Activated CD8-positive, alpha-beta T cell treated with anti-CD3 and anti-CD28 coated beads, Interleukin-2, amount 10 ng/mL, durations not matched to agents 7 days and 5 days (primary cell): ENCODE measurements at regions of chr17 and their contacts with region 1.

Region 1: GRCh38 chr17:7478276-7479153 is 916 bp downstream of the ZBTB4 start:
- DNase-seq: peak; percentile 74
- ATAC-seq: peak; percentile 37
- H3K4me3 Mint-ChIP-seq: peak overlapping the region; percentile 94
- H3K27ac Mint-ChIP-seq: peak overlapping the region; percentile 90
- H3K4me1 Mint-ChIP-seq: peaks cover 71% of the 10 kb centered on the region
- H3K27me3 Mint-ChIP-seq: no peaks in the 10 kb centered on the region

Region 2: DNA sequence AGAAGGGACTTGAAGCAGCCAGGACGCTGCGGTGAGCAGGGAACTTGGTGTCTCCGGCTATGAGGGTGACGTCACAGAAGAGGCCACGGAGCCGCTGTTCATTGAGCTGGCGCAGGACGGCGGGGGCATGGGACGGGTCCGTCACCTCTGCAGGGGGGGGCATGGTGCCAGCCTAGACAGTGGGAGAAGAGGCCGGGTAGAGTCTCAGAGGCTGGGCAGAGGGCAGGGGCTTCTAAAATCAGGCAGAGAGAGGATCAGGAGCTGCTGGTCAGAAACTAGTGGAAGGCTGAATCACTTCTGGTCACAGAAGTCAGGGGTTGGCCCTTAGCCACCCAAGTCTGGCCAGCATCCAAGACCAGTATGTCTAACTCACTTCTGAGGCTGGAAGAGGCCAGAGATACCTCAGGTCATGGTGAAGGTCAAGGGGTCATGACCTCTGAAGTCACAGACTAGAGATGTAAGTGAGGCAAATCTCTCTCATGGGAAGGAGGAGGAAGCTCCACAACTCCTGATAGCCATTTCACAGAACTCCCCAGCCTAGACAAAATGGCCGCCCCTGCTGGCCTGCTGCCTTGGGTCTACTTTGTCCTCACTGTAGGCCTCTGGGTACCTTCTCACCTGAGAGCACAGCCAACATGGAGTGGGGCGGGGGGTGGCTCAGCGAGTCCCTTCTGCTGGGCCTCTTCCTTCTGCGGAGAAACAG is 11.7 kb before region 1 on chr17:
- CTCF ChIA-PET with region 1: interaction called, 7 read pairs
- POLR2A ChIA-PET with region 1: interaction called, 19 read pairs
- DNase-seq: no peak
- ATAC-seq: no peak
- H3K4me3 Mint-ChIP-seq: no peak overlapping the region
- H3K27ac Mint-ChIP-seq: peak overlapping the region; percentile 43
- H3K4me1 Mint-ChIP-seq: peaks cover 27% of the 10 kb centered on the region
- H3K27me3 Mint-ChIP-seq: no peaks in the 10 kb centered on the region